Colonic mucosa (tissue), 4 donors: ENCODE measurements at regions of chr2 and their contacts with region 1.

Region 1: GRCh38 chr2:161423421-161424393 is 7.6 kb downstream of the TBR1 start:
- DNase-seq: peak; percentile 25
- H3K4me3 ChIP-seq: peak overlapping the region; percentile 37
- H3K27ac ChIP-seq: no peak overlapping the region
- H3K4me1 ChIP-seq: peaks cover 4% of the 10 kb centered on the region
- H3K27me3 ChIP-seq: peaks cover 97% of the 10 kb centered on the region
- CTCF ChIP-seq: no peak

Region 2: DNA sequence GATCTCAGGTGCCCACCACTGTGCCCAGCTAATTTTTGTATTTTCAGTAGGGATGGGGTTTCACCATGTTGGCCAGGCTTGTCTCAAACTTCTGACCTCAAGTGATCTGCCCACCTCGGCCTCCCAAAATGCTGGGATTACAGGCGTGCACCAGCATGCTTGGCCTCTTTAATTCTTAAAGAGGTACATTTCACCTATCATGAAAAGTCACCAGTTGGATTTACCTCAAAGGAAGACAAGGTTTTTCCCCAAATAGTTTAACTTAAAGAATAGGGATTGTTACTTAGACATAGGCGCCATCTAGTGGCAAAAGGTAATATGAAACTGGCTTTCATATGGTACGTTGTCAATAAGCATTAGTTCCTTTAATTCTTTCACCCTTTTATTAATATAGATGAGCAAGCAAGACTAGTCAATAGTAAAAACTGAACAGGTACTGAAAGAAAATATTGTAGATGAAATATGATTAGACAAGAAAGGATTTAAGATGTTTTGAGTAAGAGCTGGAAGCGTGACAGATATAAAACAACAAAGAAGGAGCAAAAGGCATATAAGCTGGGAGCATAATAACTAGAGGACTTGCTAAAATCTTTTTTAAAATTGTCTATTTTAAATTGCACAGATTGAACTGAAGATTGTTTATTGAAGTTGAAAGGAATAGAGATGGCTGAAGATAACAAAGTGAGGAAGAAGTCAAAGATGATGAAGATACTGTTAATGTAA is 150.5 kb before region 1 on chr2:
- intact Hi-C with region 1: no loop called
- DNase-seq: peak; percentile 27
- H3K4me3 ChIP-seq: no peak overlapping the region
- H3K27ac ChIP-seq: no peak overlapping the region
- H3K4me1 ChIP-seq: no peaks in the 10 kb centered on the region
- H3K27me3 ChIP-seq: no peaks in the 10 kb centered on the region
- CTCF ChIP-seq: peak; percentile 64

Region 3: DNA sequence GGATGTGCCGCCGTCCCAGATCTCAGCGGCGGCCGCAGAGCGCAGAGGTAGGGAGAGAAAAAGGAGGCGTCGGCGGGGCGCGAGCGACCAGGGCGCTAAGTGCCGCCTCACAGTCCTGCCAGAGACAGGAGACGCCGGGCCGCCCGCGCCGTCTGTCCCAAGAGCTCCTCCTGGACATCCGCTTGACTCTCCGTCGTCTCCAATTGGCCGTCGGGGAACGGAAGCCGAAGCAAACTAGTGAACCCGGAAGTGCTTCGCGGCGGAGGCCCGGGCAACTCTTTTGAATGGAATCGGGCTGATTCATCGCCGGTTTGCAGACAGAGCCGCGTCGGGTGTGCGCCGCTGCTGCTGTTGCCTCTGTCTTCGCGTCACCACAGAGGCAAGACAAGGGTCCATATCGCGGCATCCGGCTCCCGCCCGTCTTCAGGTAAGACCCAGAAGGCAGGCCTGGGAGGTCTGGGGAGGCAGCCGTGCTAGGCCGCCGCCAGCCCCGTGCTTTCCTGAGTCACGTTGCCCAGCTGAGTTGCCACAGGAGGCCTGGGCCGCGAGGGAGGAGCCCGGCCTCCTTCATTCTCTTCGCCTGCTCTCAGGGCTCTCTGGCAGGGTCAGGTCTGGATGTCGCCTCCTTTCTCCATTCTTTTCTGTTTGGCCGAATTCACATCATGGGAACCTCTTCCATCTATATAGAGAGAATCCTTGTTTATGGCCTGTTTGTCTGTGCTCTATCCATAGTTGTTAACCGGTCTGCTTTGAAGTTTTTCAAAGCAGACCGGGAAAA is 115.3 kb before region 1 on chr2 and contains the start of gene PSMD14:
- intact Hi-C with region 1: loop called (anchors 5 kb)
- DNase-seq: peak; percentile 96
- H3K4me3 ChIP-seq: peak within 1 kb of the TSS; percentile 79
- H3K27ac ChIP-seq: peak within 1 kb of the TSS; percentile 73
- H3K4me1 ChIP-seq: peaks cover 6% of the 10 kb centered on the region
- H3K27me3 ChIP-seq: no peaks in the 10 kb centered on the region
- CTCF ChIP-seq: no peak
- total RNA-seq, gene PSMD14: 35.6 to 58.6 TPM

Region 4: DNA sequence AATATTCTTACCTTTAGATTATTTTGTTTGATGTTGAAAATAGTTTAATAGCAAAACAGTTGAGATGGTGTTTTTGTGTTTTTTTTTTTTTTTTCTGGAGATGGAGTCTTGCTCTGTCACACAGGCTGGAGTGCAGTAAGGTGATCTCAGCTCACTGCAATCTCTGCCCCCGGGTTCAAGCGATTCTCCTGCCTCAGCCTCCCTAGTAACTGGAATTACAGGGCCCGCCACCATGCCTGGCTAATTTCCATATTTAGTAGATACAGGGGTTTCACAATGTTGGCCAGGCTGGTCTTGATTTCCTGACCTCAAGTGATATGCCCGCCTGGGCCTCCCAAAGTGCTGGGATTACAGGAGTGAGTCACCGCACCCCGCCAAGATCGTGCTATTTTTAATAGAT is 122.2 kb after region 1 on chr2:
- intact Hi-C with region 1: no loop called
- DNase-seq: no peak
- H3K4me3 ChIP-seq: no peak overlapping the region
- H3K27ac ChIP-seq: no peak overlapping the region
- H3K4me1 ChIP-seq: no peaks in the 10 kb centered on the region
- H3K27me3 ChIP-seq: no peaks in the 10 kb centered on the region
- CTCF ChIP-seq: no peak

Region 5: GRCh38 chr2:161913865-161914264 is 490.2 kb after region 1 on chr2:
- intact Hi-C with region 1: no loop called
- DNase-seq: no peak
- H3K4me3 ChIP-seq: no peak overlapping the region
- H3K27ac ChIP-seq: no peak overlapping the region
- H3K4me1 ChIP-seq: no peaks in the 10 kb centered on the region
- H3K27me3 ChIP-seq: no peaks in the 10 kb centered on the region
- CTCF ChIP-seq: no peak

Region 6: DNA sequence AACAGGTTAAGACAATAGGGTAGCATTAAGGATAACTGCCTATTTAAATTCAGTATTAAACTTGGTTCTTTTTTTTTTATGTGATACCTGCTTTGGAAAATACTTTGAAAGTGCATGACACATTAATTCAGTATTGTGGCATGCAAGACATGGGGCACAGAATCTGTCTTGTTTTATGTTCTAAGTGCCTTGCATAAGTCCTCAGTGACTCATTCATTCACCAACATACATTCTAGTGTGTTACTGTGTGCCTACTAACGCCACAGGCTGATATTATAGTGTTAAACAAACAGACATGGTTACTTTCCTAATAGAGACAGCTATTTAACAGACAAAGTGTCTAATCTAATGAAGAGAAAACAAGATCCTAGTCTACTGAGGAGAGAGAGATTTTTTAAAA is 1012.0 kb after region 1 on chr2:
- intact Hi-C with region 1: no loop called
- DNase-seq: no peak
- H3K4me3 ChIP-seq: no peak overlapping the region
- H3K27ac ChIP-seq: no peak overlapping the region
- H3K4me1 ChIP-seq: no peaks in the 10 kb centered on the region
- H3K27me3 ChIP-seq: no peaks in the 10 kb centered on the region
- CTCF ChIP-seq: no peak